ENCODE measurements at regions of chr19 and their contacts with region 1.

Region 1: GRCh38 chr19:40465557-40466150 is at the start of gene BLVRB:
- DNase-seq: peak; percentile 94 to 99
- H3K4me3 ChIP-seq: peak within 1 kb of the TSS; percentile 82
- H3K27ac ChIP-seq: peak within 1 kb of the TSS; percentile 98
- H3K4me1 ChIP-seq: peaks cover 22% of the 10 kb centered on the region
- H3K27me3 ChIP-seq: no peaks in the 10 kb centered on the region
- CTCF ChIP-seq: no peak
- total RNA-seq, gene BLVRB: 204 and 239 TPM in 2 replicates

Region 2: DNA sequence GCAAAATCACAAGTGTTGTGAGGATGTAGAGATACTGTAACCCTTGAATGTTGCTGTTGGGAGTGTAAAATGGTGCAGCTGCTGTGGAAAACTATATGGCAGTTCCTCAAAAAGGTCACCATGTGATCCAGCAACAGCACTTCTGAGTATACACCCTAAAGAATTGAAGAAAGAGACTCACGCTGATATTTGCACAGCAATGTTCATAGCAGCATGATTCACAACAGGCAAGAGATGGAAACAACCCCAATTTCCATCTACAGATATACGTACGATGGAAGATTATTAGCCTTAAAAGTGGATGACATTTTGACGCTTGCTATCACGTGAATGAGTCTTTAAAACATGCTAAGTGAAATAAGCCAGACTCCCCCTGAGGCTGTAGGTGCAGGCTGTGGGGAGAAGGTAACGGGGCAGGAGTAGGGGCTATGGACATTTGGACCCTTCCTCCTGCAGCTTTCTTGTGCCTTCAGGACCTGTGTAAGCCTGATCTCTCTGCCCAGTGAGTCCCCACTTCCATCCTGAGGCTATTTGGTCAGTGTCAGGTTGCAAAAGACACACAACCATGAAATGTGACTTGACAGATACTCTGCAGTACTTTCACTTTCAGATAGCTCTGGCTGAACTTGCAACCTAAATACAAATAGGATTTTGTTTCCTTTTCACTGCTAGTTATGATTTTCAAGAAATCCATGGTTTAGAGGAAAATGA is 908.1 kb before region 1 on chr19:
- CTCF ChIA-PET with region 1: no interaction called
- POLR2A ChIA-PET with region 1: no interaction called
- intact Hi-C with region 1: no loop called
- DNase-seq: peak; percentile 44 to 75
- H3K4me3 ChIP-seq: no peak overlapping the region
- H3K27ac ChIP-seq: no peak overlapping the region
- H3K4me1 ChIP-seq: peaks cover 10% of the 10 kb centered on the region; the same call in 1 of the 2 replicates
- H3K27me3 ChIP-seq: peaks cover 34% of the 10 kb centered on the region
- CTCF ChIP-seq: no peak

Region 3: DNA sequence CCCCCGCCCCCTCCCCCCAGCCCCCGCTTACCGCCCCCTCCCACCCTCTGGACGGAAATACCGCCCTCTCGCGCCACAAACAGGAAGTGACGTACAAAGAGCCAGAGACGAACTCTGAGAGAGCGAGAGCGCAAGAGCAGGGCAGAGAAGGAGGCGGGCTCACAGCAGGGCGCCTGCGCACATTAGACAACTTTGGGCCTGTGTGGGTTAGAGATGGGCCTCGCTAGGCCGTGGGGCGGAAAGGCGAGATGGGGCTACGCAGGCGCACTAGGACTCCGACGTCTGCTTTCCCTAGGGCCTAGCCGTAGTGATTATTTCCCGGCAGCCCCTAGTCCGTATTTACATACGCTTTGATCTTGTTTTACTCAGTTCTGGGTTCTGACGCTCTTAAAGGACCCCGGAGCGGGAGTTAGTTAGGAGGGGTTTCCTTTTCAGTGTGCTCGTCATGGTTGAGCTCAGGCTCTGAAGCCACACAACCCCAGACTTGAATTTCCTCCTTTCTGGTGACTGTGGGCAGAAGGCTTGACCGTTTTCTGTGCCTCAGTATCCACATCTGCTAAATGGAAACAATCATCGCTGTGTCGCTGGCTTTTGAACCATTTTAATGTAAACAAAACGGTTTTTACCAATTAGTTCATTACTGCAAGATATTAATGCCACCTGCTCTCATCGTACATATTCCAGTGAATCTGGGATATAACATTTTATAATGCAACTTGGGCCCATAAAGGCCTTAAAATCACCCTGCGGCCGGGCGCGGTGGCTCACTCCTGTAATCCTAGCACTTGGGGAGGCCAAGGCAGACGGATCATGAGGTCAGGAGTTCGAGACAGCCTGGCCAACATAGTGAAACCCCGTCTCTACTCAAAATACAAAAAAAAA is 180.1 kb before region 1 on chr19:
- CTCF ChIA-PET with region 1: interaction called, 5 read pairs
- POLR2A ChIA-PET with region 1: interaction called, 16 read pairs
- intact Hi-C with region 1: no loop called
- DNase-seq: peak; percentile 97 to 98
- H3K4me3 ChIP-seq: peak overlapping the region; percentile 53
- H3K27ac ChIP-seq: peak overlapping the region; percentile 83
- H3K4me1 ChIP-seq: peaks cover 17% of the 10 kb centered on the region; the same call in 1 of the 2 replicates
- H3K27me3 ChIP-seq: no peaks in the 10 kb centered on the region
- CTCF ChIP-seq: no peak

Region 4: GRCh38 chr19:40348125-40348913 is 117.3 kb before region 1 on chr19 and contains the starts of genes C19orf47 and PLD3:
- CTCF ChIA-PET with region 1: no interaction called
- POLR2A ChIA-PET with region 1: interaction called, 4 read pairs
- intact Hi-C with region 1: loop called (anchors 1 kb)
- DNase-seq: peak; percentile 95 to 99
- H3K4me3 ChIP-seq: peak within 1 kb of the TSS; percentile 96
- H3K27ac ChIP-seq: peak within 1 kb of the TSS; percentile 32; the same call in 1 of the 2 replicates
- H3K4me1 ChIP-seq: peaks cover 17% of the 10 kb centered on the region; the same call in 1 of the 2 replicates
- H3K27me3 ChIP-seq: no peaks in the 10 kb centered on the region
- CTCF ChIP-seq: no peak
- total RNA-seq, gene C19orf47: 17.3 and 21.2 TPM in 2 replicates
- total RNA-seq, gene PLD3: 146 and 187 TPM in 2 replicates

Region 5: GRCh38 chr19:40425450-40426287 is 40.0 kb before region 1 on chr19 and contains the start of gene SERTAD1:
- CTCF ChIA-PET with region 1: interaction called, 4 read pairs
- POLR2A ChIA-PET with region 1: interaction called, 8 read pairs
- intact Hi-C with region 1: loop called (anchors 2 kb)
- DNase-seq: peak; percentile 96 to 99
- H3K4me3 ChIP-seq: peak within 1 kb of the TSS; percentile 87
- H3K27ac ChIP-seq: peak within 1 kb of the TSS; percentile 92
- H3K4me1 ChIP-seq: peaks cover 12% of the 10 kb centered on the region
- H3K27me3 ChIP-seq: no peaks in the 10 kb centered on the region
- CTCF ChIP-seq: peak; percentile 81
- total RNA-seq, gene SERTAD1: 7.8 and 8.5 TPM in 2 replicates

Region 6: GRCh38 chr19:40444192-40445028 is 21.2 kb before region 1 on chr19 and contains the start of gene SERTAD3:
- CTCF ChIA-PET with region 1: interaction called, 3 read pairs
- POLR2A ChIA-PET with region 1: interaction called, 5 read pairs
- intact Hi-C with region 1: loop called (anchors 1 kb)
- DNase-seq: peak; percentile 75 to 98
- H3K4me3 ChIP-seq: peak within 1 kb of the TSS; percentile 75
- H3K27ac ChIP-seq: peak within 1 kb of the TSS; percentile 70
- H3K4me1 ChIP-seq: peaks cover 12% of the 10 kb centered on the region
- H3K27me3 ChIP-seq: no peaks in the 10 kb centered on the region
- CTCF ChIP-seq: no peak
- total RNA-seq, gene SERTAD3: 35.9 and 41.4 TPM in 2 replicates

Region 7: DNA sequence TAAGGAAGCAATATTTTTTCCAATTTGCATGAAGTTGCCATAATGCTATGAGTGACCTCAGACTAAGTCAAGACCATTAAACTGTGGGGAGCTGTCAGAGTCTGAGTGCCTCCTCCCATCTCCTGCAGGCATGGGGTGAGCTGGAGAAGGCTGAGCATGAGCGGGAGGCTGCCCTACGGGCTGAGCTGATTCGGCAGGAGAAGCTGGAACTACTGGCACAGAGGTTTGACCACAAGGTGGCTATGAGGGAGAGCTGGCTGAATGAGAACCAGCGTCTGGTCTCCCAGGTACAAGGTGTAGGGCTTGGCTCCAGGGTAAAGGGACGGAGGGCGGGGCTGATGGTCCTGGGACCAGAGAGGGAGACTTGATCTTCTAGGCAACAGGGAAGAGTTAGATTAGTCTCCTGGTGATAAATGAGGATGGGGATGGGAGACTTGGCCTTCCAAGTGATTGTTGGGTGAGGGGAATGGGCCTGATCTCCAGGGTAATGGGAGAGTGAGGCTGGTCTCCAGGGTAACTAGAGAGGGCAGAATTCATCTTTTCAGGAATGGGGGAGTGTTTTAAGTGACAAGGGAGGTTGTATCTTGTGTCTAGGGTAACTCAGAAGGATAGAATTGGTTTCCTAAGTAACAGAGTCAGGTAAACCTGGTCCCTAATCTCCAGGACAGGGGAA is 37.1 kb after region 1 on chr19:
- CTCF ChIA-PET with region 1: no interaction called
- POLR2A ChIA-PET with region 1: no interaction called
- intact Hi-C with region 1: no loop called
- DNase-seq: peak; percentile 46 to 54
- H3K4me3 ChIP-seq: no peak overlapping the region
- H3K27ac ChIP-seq: no peak overlapping the region
- H3K4me1 ChIP-seq: no peaks in the 10 kb centered on the region
- H3K27me3 ChIP-seq: peaks cover 23% of the 10 kb centered on the region
- CTCF ChIP-seq: peak; percentile 55; the same call in 1 of the 2 replicates

Region 8: DNA sequence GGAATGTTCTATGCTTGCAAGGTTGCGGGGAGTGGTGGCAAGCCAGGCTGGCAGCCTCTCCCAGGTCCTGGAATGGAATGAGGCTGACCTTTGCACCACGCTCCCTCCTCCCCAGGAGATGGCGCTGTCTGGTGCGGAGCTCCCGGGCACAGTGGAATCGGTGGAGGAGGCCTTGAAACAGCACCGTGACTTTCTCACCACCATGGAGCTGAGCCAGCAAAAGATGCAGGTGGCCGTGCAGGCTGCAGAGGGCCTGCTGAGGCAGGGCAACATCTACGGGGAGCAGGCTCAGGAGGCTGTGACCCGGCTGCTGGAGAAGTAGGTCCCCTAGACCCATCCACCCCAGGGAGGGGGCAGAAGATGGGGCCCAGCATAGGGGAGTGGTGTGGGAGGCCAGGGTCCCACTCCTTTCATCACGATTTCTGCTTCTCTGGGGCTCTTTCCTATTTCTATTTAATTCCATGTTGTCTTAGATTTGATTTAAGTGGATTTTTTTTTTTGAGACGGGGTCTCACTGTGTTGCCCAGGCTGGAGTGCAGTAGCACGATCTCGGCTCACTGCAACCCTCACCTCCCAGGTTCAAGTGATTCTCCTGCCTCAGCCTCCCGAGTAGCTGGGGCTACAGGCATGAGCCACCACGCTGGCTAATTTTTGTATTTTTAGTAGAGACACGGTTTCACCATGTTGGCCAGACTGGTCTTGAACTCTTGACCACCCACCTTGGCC is 57.8 kb after region 1 on chr19:
- CTCF ChIA-PET with region 1: interaction called, 15 read pairs
- POLR2A ChIA-PET with region 1: interaction called, 4 read pairs
- intact Hi-C with region 1: loop called (anchors 5 kb)
- DNase-seq: peak; percentile 61 to 75
- H3K4me3 ChIP-seq: no peak overlapping the region
- H3K27ac ChIP-seq: no peak overlapping the region
- H3K4me1 ChIP-seq: no peaks in the 10 kb centered on the region
- H3K27me3 ChIP-seq: peaks cover 4% of the 10 kb centered on the region; the same call in 1 of the 2 replicates
- CTCF ChIP-seq: peak; percentile 70

Region 9: DNA sequence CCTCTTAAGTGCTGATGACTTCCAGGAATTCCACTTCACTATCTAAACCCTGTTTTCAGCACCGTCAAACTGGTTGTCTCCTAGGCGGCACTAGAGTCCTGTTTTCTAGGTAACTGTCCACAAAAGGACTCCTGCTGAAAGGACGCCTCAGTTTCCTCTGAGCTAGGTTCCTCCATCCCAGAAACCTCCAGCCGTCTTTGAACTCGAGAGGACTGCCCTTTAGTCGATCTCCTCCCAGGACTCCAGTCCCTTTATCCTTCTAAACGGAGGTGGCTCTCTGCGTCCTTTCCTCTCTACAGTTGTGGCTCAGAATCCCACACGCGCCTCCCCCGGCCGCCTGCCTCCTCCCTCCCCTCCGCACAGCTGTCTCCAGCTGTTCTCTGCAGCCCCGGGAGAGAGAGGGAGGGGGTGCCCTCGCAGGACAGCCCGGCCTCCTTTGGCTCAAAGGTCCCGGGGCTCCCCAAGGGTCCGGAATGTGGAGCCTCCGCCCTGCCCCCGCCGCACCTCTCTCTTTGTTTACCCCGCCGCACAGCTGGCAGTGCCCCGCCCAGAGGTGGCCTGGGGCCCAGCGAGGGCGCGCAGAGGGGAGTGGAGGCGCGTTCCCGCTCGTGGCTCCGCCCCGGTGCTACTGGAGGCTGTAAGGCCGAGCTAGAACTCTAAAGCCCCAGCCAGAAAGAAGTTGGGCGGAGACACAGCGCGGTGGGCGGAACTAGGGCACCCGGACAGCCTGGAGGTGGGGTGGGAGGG is 137.9 kb after region 1 on chr19:
- CTCF ChIA-PET with region 1: interaction called, 5 read pairs
- POLR2A ChIA-PET with region 1: interaction called, 4 read pairs
- intact Hi-C with region 1: loop called (anchors 2 kb)
- DNase-seq: peak; percentile 94 to 100
- H3K4me3 ChIP-seq: peak overlapping the region; percentile 63; the same call in 1 of the 2 replicates
- H3K27ac ChIP-seq: no peak overlapping the region
- H3K4me1 ChIP-seq: peaks cover 41% of the 10 kb centered on the region
- H3K27me3 ChIP-seq: peaks cover 29% of the 10 kb centered on the region
- CTCF ChIP-seq: no peak

Region 10: GRCh38 chr19:40640744-40641143 is 175.1 kb after region 1 on chr19:
- CTCF ChIA-PET with region 1: no interaction called
- POLR2A ChIA-PET with region 1: no interaction called
- intact Hi-C with region 1: no loop called
- DNase-seq: no peak
- H3K4me3 ChIP-seq: no peak overlapping the region
- H3K27ac ChIP-seq: no peak overlapping the region
- H3K4me1 ChIP-seq: peaks cover 12% of the 10 kb centered on the region
- H3K27me3 ChIP-seq: no peaks in the 10 kb centered on the region
- CTCF ChIP-seq: no peak